ENCODE measurements at regions of chr3 and their contacts with region 1.

Region 1: DNA sequence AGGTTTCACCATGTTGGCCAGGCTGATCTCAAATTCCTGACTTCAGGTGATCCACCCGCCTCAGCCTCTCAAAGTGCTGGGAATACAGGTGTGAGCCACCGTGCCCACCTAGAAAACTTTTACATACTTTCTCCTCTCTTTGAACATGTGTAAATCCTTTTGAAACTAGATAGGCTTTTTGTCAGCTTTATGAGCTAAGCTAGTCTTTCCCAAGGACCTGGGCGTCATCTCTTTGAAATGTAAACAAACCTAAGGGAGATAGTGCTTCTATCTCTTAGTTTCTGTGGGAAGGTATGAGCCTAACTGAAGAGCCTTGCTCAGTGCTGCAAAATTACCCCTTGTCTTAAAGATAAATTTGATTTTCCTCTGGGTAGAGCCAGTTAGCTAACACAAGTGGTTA is 4.8 kb downstream of the CX3CR1 start:
- DNase-seq: no peak
- H3K4me3 ChIP-seq: no peak overlapping the region
- H3K27ac ChIP-seq: no peak overlapping the region
- H3K4me1 ChIP-seq: peaks cover 5% of the 10 kb centered on the region
- CTCF ChIP-seq: no peak

Region 2: GRCh38 chr3:39260957-39261356 is 14.1 kb before region 1 on chr3:
- CTCF ChIA-PET with region 1: no interaction called
- POLR2A ChIA-PET with region 1: interaction called, 10 read pairs
- intact Hi-C with region 1: no loop called
- DNase-seq: peak; percentile 65
- H3K4me3 ChIP-seq: no peak overlapping the region
- H3K27ac ChIP-seq: no peak overlapping the region
- H3K4me1 ChIP-seq: peaks cover 32% of the 10 kb centered on the region
- CTCF ChIP-seq: peak; percentile 58

Region 3: GRCh38 chr3:39327746-39328349 is 52.8 kb after region 1 on chr3:
- CTCF ChIA-PET with region 1: no interaction called
- POLR2A ChIA-PET with region 1: no interaction called
- intact Hi-C with region 1: no loop called
- DNase-seq: no peak
- H3K4me3 ChIP-seq: no peak overlapping the region
- H3K27ac ChIP-seq: no peak overlapping the region
- H3K4me1 ChIP-seq: no peaks in the 10 kb centered on the region
- CTCF ChIP-seq: no peak